BJ (cell line): ENCODE measurements at regions of chr2 and their contacts with region 1.

Region 1: GRCh38 chr2:42828487-42829425 is 36.4 kb upstream of the HAAO start:
- DNase-seq: no peak
- H3K4me3 ChIP-seq: no peak overlapping the region
- H3K27me3 ChIP-seq: no peaks in the 10 kb centered on the region
- CTCF ChIP-seq: peak; percentile 88

Region 2: GRCh38 chr2:42598656-42599055 is 230.1 kb before region 1 on chr2:
- CTCF ChIA-PET with region 1: no interaction called
- POLR2A ChIA-PET with region 1: no interaction called
- DNase-seq: no peak
- H3K4me3 ChIP-seq: no peak overlapping the region
- H3K27me3 ChIP-seq: no peaks in the 10 kb centered on the region
- CTCF ChIP-seq: no peak

Region 3: GRCh38 chr2:42792583-42793333 is 36.0 kb before region 1 on chr2 and contains the start of gene HAAO:
- CTCF ChIA-PET with region 1: no interaction called
- POLR2A ChIA-PET with region 1: no interaction called
- DNase-seq: no peak
- H3K4me3 ChIP-seq: peak within 1 kb of the TSS; percentile 22
- H3K27me3 ChIP-seq: peaks cover 12% of the 10 kb centered on the region
- CTCF ChIP-seq: 0 out of 2 replicates have a peak, but pooled peaks have one; percentile 16
- polyA plus RNA-seq, gene HAAO: 0.31 and 0.54 TPM in 2 replicates

Region 4: DNA sequence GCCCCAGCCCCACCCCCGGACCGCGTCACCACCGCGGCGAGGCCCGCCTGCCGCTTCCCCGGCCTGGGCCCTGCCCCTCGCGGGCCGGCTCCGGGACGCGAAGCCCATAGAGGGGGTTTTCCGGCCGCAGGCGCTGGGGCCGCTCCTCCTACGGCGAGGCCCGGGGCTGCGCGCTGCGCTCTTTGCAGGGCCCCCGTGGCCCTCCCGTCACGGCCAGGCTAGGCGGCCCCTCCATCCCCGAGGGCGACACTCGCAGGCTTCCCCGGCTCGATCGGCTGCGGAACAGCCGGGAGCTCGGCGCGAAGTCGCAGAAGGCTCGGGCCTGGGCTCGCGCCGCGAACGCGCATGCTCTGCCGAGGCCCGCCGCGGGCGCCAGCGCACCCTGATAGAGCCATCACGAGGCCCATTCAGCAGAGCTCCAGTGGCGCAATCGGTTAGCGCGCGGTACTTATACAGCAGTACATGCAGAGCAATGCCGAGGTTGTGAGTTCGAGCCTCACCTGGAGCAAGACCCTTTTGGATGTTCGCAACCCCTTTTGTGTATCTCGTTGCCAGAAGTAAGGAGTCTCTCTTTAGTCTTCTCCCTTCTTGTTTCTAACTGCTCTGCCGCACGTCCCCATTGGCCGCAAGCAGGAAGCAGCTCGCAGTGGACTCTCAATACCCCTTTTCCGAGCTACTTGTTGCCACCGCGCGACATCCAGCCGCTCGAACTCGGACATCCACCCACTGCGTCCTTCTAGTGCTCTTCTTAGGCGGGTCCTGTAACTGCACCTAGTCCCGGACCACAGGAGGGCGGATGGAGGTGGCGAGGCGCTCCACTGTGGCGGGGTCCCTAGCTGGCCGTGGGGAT is 18.4 kb before region 1 on chr2:
- CTCF ChIA-PET with region 1: interaction called, 27 read pairs
- POLR2A ChIA-PET with region 1: no interaction called
- DNase-seq: peak; percentile 87
- H3K4me3 ChIP-seq: peak overlapping the region; percentile 65
- H3K27me3 ChIP-seq: no peaks in the 10 kb centered on the region; the same call in 1 of the 2 replicates
- CTCF ChIP-seq: no peak

Region 5: GRCh38 chr2:42944779-42945415 is 116.1 kb after region 1 on chr2:
- CTCF ChIA-PET with region 1: interaction called, 28 read pairs
- POLR2A ChIA-PET with region 1: no interaction called
- DNase-seq: no peak
- H3K4me3 ChIP-seq: no peak overlapping the region
- H3K27me3 ChIP-seq: no peaks in the 10 kb centered on the region
- CTCF ChIP-seq: no peak

Region 6: GRCh38 chr2:43509886-43510285 is 681.1 kb after region 1 on chr2:
- CTCF ChIA-PET with region 1: no interaction called
- POLR2A ChIA-PET with region 1: interaction called, 21 read pairs
- DNase-seq: no peak
- H3K4me3 ChIP-seq: no peak overlapping the region
- H3K27me3 ChIP-seq: no peaks in the 10 kb centered on the region
- CTCF ChIP-seq: no peak

Region 7: DNA sequence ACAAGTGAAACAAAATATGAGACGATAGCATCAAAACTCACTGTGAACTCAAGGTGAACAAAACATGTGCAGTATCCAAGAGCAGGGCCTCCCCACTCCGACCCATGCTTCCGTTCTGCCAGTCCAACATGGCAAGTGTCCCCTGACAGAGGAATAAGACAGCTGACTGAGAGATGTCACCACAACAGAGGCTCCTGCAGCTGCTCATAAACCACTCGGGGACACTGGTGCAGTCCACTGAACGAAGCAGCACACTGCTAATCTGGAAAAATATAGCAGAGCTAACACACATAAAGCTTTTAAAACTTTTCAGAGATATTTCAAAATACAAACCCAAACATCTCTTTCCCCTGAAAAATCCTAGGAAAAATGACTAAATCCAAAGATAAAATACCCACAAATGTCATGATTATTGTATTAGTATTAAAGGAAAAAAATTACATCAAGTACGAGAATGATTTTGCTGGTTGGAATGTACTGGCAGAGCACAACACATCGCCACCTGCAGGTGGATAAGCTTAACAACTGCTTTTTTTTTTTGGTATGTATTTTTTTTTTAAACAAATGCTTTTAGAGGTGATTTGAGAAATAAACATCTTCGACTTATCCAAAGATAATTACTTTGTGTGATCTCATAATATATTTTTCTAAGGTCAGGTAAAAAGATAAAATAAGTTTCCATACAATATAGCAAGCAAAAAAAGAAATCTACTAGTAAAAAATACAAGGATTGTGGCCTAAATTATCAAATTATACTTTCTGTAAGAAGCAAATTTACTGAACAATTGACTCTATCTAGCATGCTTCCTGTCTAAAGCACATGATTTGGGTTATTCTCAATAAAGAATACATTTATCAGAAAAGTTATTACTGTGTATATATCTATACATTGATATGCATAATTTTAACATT is 748.5 kb after region 1 on chr2:
- CTCF ChIA-PET with region 1: interaction called, 11 read pairs
- POLR2A ChIA-PET with region 1: no interaction called
- DNase-seq: no peak
- H3K4me3 ChIP-seq: no peak overlapping the region
- H3K27me3 ChIP-seq: no peaks in the 10 kb centered on the region
- CTCF ChIP-seq: peak; percentile 76